ENCODE measurements at regions of chr1 and their contacts with region 1.

Region 1: GRCh38 chr1:114013219-114013618 is 33.9 kb downstream of the OLFML3 start:
- DNase-seq: no peak
- ATAC-seq: no peak
- H3K4me3 ChIP-seq: no peak overlapping the region
- H3K4me3 Mint-ChIP-seq: no peak overlapping the region
- H3K27ac ChIP-seq: no peak overlapping the region
- H3K27ac Mint-ChIP-seq: no peak overlapping the region
- H3K4me1 ChIP-seq: no peaks in the 10 kb centered on the region
- H3K4me1 Mint-ChIP-seq: no peaks in the 10 kb centered on the region
- H3K27me3 ChIP-seq: peaks cover 0 to 4% of the 10 kb centered on the region in 2 experiments
- H3K27me3 Mint-ChIP-seq: peaks cover 12 to 15% of the 10 kb centered on the region in 2 donors

Region 2: GRCh38 chr1:112111734-112112133 is 1901.5 kb before region 1 on chr1:
- CTCF ChIA-PET with region 1: interaction called in 1 of 2 experiments, 12 read pairs
- POLR2A ChIA-PET with region 1: no interaction called
- DNase-seq: no peak
- ATAC-seq: no peak
- H3K4me3 ChIP-seq: no peak overlapping the region
- H3K4me3 Mint-ChIP-seq: no peak overlapping the region
- H3K27ac ChIP-seq: no peak overlapping the region
- H3K27ac Mint-ChIP-seq: no peak overlapping the region
- H3K4me1 ChIP-seq: no peaks in the 10 kb centered on the region
- H3K4me1 Mint-ChIP-seq: no peaks in the 10 kb centered on the region
- H3K27me3 ChIP-seq: peaks cover 0 to 3% of the 10 kb centered on the region in 2 experiments
- H3K27me3 Mint-ChIP-seq: peaks cover 25 to 52% of the 10 kb centered on the region in 2 donors

Region 3: DNA sequence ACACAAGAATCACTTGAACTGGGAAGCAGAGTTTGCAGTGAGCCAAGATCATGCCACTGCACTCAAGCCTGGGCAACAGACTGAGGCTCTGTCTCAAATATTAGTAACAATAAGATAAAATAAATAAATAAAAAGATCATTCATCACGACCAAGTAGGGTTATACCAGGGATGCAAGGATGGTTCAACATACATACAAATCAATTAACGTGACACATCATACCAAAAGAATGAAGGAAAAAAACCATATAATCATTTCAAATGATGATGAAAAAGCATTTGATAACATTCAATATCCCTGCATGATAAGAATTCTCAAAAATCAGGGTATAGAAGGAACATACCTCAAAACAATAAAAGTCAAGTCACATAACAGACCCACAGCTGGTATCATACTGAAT is 292.2 kb before region 1 on chr1:
- CTCF ChIA-PET with region 1: no interaction called
- POLR2A ChIA-PET with region 1: no interaction called
- DNase-seq: no peak
- ATAC-seq: no peak
- H3K4me3 ChIP-seq: no peak overlapping the region
- H3K4me3 Mint-ChIP-seq: no peak overlapping the region
- H3K27ac ChIP-seq: no peak overlapping the region
- H3K27ac Mint-ChIP-seq: no peak overlapping the region
- H3K4me1 ChIP-seq: no peaks in the 10 kb centered on the region
- H3K4me1 Mint-ChIP-seq: no peaks in the 10 kb centered on the region
- H3K27me3 ChIP-seq: no peaks in the 10 kb centered on the region
- H3K27me3 Mint-ChIP-seq: no peaks in the 10 kb centered on the region